Activated CD4-positive, alpha-beta memory T cell treated with anti-CD3 and anti-CD28 coated beads, Interleukin-2, amount 10 ng/mL, durations not matched to agents 7 days and 5 days (primary cell): ENCODE measurements at regions of chr2 and their contacts with region 1.

Region 1: DNA sequence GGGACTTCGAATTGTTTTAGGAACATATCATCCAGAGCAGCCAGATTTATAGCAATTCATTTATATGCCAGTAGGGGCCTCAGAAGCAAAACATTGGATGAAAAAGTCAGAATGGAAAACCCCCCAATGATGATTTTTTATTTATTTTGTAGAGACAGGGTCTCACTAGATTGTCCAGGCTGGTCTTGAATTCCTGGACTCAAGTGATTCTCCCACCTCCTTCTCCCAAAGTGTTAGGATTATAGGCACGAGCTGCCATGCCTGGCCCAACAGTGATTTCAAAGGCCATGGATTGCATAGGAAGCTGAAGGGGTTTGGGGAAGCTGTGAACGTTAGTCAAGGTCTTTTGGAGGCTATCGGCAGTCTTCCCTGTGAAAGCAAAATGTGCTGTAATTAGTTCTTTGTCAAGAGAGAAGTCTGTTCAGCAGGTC is 21.9 kb upstream of the MCFD2 start:
- DNase-seq: no peak
- H3K4me3 Mint-ChIP-seq: no peak overlapping the region
- H3K27ac Mint-ChIP-seq: no peak overlapping the region
- H3K4me1 Mint-ChIP-seq: peaks cover 13% of the 10 kb centered on the region
- H3K27me3 Mint-ChIP-seq: no peaks in the 10 kb centered on the region

Region 2: GRCh38 chr2:46899053-46899452 is 38.4 kb before region 1 on chr2:
- CTCF ChIA-PET with region 1: no interaction called
- POLR2A ChIA-PET with region 1: no interaction called
- DNase-seq: no peak
- H3K4me3 Mint-ChIP-seq: no peak overlapping the region
- H3K27ac Mint-ChIP-seq: no peak overlapping the region
- H3K4me1 Mint-ChIP-seq: no peaks in the 10 kb centered on the region
- H3K27me3 Mint-ChIP-seq: no peaks in the 10 kb centered on the region

Region 3: DNA sequence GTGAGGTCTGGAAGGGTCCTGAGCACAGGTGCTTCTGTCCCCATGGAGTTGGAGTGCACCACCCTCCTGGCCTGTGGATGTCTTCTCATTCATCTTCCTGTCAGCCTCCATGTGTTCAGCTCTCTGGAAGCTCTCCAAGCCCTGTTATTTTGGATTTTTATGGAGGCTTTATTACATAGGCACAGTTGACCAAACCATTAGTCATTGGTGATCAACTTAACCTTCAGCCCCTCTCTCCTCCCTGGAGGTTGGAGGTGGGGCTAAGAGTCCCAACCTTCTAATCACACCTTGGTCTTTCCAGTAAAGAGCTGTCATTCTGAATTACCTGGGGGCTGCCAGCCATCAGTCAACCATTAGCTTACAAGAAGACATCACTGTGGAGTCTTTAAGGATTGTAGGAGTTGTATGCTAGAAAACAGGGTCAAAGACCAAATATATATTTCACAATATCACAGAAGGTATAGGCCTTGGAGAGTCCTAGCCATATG is 14.4 kb before region 1 on chr2:
- CTCF ChIA-PET with region 1: interaction called, 23 read pairs
- POLR2A ChIA-PET with region 1: interaction called, 5 read pairs
- DNase-seq: no peak
- H3K4me3 Mint-ChIP-seq: no peak overlapping the region
- H3K27ac Mint-ChIP-seq: no peak overlapping the region
- H3K4me1 Mint-ChIP-seq: peaks cover 19% of the 10 kb centered on the region
- H3K27me3 Mint-ChIP-seq: no peaks in the 10 kb centered on the region

Region 4: GRCh38 chr2:47323009-47323821 is 385.7 kb after region 1 on chr2:
- CTCF ChIA-PET with region 1: interaction called, 10 read pairs
- POLR2A ChIA-PET with region 1: no interaction called
- DNase-seq: peak; percentile 71
- H3K4me3 Mint-ChIP-seq: no peak overlapping the region
- H3K27ac Mint-ChIP-seq: no peak overlapping the region
- H3K4me1 Mint-ChIP-seq: no peaks in the 10 kb centered on the region
- H3K27me3 Mint-ChIP-seq: peaks cover 13% of the 10 kb centered on the region